Common myeloid progenitor, CD34-positive (primary cell): ENCODE measurements at regions of chr3 and their contacts with region 1.

Region 1: DNA sequence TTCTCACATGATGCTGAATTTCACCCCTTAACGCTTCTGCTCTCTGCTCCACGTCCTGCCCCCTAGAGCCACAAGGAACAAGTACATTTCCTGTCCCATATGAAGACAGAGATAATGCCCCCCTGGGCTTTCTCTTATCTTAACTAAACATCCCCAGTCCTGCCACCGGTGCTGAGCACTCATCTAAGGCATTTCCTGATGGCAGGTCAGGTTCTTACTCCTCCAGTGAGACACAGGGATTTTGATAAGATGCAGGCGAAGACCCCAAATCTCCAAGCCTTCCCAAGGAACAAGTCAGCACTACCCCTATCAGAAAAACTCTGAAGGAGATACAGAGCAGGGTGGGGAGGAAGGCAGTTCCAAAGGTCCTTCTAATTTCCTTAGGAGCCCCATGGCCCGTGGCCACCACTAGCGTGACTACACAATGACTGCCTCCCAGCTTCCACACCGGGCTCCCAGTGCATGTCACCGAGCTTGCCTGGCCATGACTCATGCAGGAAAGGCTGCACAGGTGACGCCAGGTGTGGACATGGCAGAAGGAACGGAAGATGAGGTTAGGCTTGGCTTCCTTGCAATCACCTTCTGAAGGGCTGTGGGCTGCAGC is 152.9 kb downstream of the XXYLT1 start:
- DNase-seq: peak; percentile 67 to 89 (median 85)
- H3K4me3 ChIP-seq: peak overlapping the region in 1 of 7 experiments; percentile 35
- H3K27ac ChIP-seq: peak overlapping the region in 1 of 2 experiments; percentile 41
- H3K4me1 ChIP-seq: peaks cover 16 to 54% (median 40%) of the 10 kb centered on the region in 4 experiments
- H3K27me3 ChIP-seq: no peaks in the 10 kb centered on the region

Region 2: GRCh38 chr3:195058336-195059005 is 59.6 kb before region 1 on chr3:
- CTCF ChIA-PET with region 1: no interaction called
- POLR2A ChIA-PET with region 1: no interaction called
- DNase-seq: no peak
- H3K4me3 ChIP-seq: peak overlapping the region in 1 of 7 experiments; percentile 19
- H3K27ac ChIP-seq: no peak overlapping the region
- H3K4me1 ChIP-seq: peaks cover 0 to 20% (median 9%) of the 10 kb centered on the region in 4 experiments
- H3K27me3 ChIP-seq: no peaks in the 10 kb centered on the region

Region 3: GRCh38 chr3:195106418-195106906 is 11.6 kb before region 1 on chr3:
- CTCF ChIA-PET with region 1: interaction called, 32 read pairs
- POLR2A ChIA-PET with region 1: no interaction called
- DNase-seq: peak in 2 of 3 donors; percentile 71 to 75
- H3K4me3 ChIP-seq: peak overlapping the region in 3 of 7 experiments; percentile 9 to 58 (median 43)
- H3K27ac ChIP-seq: no peak overlapping the region
- H3K4me1 ChIP-seq: peaks cover 0 to 45% (median 33%) of the 10 kb centered on the region in 4 experiments
- H3K27me3 ChIP-seq: no peaks in the 10 kb centered on the region

Region 4: GRCh38 chr3:195133462-195133861 is 15.4 kb after region 1 on chr3:
- CTCF ChIA-PET with region 1: interaction called, 45 read pairs
- POLR2A ChIA-PET with region 1: interaction called, 3 read pairs
- DNase-seq: no peak
- H3K4me3 ChIP-seq: no peak overlapping the region
- H3K27ac ChIP-seq: no peak overlapping the region
- H3K4me1 ChIP-seq: peaks cover 0 to 21% (median 17%) of the 10 kb centered on the region in 4 experiments
- H3K27me3 ChIP-seq: no peaks in the 10 kb centered on the region